ENCODE measurements at regions of chr3 and their contacts with region 1.

Region 1: GRCh38 chr3:49339945-49340800 is at the start of gene USP4:
- H3K4me3 Mint-ChIP-seq: peak within 1 kb of the TSS; percentile 98
- H3K27ac Mint-ChIP-seq: peak within 1 kb of the TSS; percentile 98
- H3K4me1 Mint-ChIP-seq: peaks cover 60% of the 10 kb centered on the region
- H3K27me3 Mint-ChIP-seq: no peaks in the 10 kb centered on the region

Region 2: DNA sequence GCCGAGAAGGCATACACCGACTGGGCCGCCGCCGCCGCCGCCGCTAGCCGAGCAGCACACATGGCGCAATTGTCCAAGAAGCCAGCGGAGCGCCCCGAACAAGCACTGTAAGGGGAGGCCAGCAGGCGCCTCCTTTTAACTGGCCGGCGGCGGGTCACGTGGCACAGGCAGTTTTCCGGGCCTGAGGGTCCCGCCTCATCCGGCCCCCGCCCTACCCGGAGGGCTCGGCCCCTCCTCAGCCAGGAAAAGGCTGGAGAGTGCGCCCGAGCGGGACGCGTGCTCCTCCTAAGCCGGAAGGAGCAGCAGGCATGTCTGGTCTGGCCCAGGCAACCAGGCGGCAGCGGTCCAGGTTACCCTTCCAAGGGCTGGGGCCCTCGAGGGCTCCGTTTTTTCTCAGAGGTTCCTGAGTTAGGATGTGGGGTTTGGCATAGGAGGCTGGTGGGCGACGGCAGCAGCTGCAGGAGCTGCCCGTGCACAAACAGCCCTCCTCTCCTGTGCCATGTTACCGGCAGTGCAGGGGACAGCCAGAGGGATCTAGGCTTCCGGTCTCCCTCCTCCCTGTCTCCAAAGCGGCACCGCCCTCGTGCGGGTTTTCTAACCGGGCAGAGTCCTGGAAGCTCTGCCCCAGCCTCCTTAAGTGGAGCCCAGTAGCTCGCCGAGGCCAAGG is 18.2 kb after region 1 on chr3 and contains the start of gene GPX1:
- intact Hi-C with region 1: loop called (anchors 1 kb)
- H3K4me3 Mint-ChIP-seq: peak within 1 kb of the TSS; percentile 97
- H3K27ac Mint-ChIP-seq: peak within 1 kb of the TSS; percentile 98
- H3K4me1 Mint-ChIP-seq: peaks cover 58% of the 10 kb centered on the region
- H3K27me3 Mint-ChIP-seq: no peaks in the 10 kb centered on the region

Region 3: DNA sequence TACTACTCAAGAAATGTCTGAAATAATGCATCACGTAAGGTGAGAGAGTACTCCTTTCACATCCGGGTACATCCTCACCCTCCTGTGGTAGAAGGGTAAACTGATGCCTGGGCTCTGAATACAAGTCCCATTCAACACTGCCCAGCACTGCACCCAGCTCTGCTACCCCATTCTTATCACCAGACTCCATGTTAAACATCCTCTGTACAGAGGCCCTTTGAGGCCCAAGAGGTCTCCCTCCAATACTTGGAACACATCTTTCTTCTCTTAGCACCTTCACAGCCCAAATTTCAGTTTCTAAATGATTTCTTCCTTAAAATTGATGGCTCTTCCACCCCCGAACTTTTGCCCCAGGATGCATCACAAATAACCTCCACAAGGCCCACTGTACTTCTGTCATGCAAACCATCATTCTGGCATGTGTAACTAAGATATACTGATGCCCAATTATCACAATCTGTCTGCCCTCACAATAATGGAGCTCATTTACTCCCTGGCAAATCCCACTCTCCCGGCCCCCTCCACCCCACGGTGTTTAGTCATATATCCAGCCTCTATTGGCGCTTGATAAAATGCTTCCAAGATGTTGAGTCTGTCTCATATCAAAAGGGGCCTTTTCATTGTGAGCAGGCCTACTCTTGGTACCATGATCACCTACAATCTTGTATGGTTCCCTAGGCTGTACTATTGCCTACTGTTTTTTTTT is 30.6 kb after region 1 on chr3:
- intact Hi-C with region 1: loop called (anchors 5 kb)
- H3K4me3 Mint-ChIP-seq: no peak overlapping the region
- H3K27ac Mint-ChIP-seq: no peak overlapping the region
- H3K4me1 Mint-ChIP-seq: peaks cover 31% of the 10 kb centered on the region
- H3K27me3 Mint-ChIP-seq: no peaks in the 10 kb centered on the region

Region 4: DNA sequence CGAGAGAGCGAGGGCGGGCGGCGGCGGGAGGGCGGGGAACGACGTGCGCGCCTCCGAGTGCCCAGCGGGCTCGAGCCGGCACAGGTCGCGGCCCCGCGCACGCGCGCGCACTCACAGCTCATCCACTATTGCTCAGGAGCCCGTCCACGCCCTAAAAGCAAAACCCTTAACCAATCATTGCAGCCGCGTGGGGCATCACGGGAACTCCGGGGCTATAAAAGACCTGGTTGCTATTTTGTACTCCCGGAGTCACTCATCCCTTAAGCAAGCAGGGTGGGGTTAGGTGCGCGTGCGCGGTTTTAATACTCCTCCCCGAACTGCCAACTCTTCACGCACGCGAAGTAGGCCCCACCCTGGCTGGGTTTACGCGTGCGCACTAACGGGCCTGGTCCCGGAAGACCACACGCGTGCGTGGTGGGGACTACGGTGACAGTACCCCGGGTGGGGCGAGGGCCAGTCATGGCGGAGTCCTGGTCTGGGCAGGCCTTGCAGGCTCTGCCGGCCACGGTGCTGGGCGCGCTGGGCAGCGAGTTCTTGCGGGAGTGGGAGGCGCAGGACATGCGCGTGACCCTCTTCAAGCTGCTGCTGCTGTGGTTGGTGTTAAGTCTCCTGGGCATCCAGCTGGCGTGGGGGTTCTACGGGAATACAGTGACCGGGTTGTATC is 71.9 kb after region 1 on chr3 and contains the starts of genes RHOA and TCTA:
- intact Hi-C with region 1: loop called (anchors 5 kb)
- H3K4me3 Mint-ChIP-seq: peak within 1 kb of the TSS; percentile 96
- H3K27ac Mint-ChIP-seq: peak within 1 kb of the TSS; percentile 95
- H3K4me1 Mint-ChIP-seq: peaks cover 72% of the 10 kb centered on the region
- H3K27me3 Mint-ChIP-seq: no peaks in the 10 kb centered on the region

Region 5: GRCh38 chr3:49445381-49445780 is 105.2 kb after region 1 on chr3:
- intact Hi-C with region 1: loop called (anchors 5 kb)
- H3K4me3 Mint-ChIP-seq: no peak overlapping the region
- H3K27ac Mint-ChIP-seq: peak overlapping the region; percentile 86
- H3K4me1 Mint-ChIP-seq: peaks cover 25% of the 10 kb centered on the region
- H3K27me3 Mint-ChIP-seq: no peaks in the 10 kb centered on the region